HepG2 (cell line): ENCODE measurements at regions of chr2 and their contacts with region 1.

Region 1: DNA sequence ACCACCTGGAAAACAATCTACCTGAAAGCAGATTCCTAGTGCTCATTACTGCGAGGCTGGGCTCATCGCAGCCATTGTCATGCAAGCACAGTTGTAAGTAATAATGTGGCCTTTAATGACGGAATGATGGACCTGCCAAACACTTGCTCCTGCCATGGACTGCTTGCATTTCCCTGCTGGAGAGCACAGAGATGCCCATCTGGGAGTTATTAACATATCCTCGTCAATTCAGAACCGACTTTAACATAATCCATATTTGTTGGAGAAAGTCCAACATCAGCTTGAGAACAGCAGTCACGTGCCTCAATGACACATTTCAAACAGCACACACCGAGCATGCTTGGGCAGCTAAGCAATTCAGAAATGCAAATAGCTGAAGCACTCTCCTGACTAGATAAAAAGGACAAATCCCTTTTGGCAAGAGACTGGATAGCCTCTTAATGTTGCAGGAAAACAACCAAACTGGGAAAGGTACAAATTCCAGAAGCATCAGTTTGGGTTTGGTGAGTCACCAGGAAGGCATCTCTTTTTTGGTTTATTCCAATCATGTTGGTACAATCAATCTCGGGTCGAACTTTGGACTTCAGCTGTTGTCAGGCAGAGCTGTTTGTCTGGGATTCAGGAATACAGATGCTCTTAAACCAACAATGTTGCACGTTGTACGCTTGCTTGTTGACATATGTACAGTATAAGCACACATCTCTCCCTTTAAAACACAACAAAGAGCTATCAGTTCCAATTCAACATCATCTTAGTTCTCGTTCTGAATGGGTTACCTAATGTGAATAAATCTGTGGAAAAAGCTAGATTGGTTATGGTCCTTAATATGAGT is 395.8 kb downstream of the LNPK start:
- DNase-seq: peak; percentile 99
- ATAC-seq: peak; percentile 95
- H3K4me3 ChIP-seq: peak overlapping the region; percentile 12 to 40 (median 38); a peak in 4 of 6 replicates
- H3K27ac ChIP-seq: peak overlapping the region; percentile 81
- H3K4me1 ChIP-seq: peaks cover 37% of the 10 kb centered on the region
- H3K27me3 ChIP-seq: no peaks in the 10 kb centered on the region
- CTCF ChIP-seq: no peak
- EP300 ChIP-seq: peak; percentile 92 to 97
- POLR2A ChIP-seq: no peak
- RAD21 ChIP-seq: no peak

Region 2: DNA sequence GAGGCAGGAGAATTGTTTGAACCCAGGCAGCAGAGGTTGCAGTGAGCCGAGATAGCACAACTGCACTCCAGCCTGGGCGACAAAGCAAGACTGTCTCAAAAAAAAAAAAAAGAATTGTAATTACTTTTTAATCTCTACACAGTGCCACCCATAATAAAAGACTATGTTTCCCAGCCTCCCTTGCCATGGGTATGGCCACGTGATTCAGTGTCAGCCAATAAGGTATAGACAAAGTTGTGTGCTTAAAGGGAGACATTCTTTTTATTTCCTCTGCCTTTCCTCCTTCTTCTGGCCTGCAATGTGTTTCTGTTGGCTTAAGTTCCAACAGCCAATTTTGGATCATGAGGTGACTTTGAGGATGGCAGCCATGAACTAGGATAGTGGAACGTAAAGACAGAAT is 11.1 kb before region 1 on chr2:
- CTCF ChIA-PET with region 1: no interaction called
- POLR2A ChIA-PET with region 1: interaction called, 39 read pairs
- in situ Hi-C with region 1: no loop called
- intact Hi-C with region 1: loop called (anchors 1 kb)
- DNase-seq: peak; percentile 27
- ATAC-seq: peak; percentile 79
- H3K4me3 ChIP-seq: peak overlapping the region; percentile 58 to 75 (median 64)
- H3K27ac ChIP-seq: no peak overlapping the region
- H3K4me1 ChIP-seq: peaks cover 42% of the 10 kb centered on the region
- H3K27me3 ChIP-seq: no peaks in the 10 kb centered on the region
- CTCF ChIP-seq: no peak
- EP300 ChIP-seq: no peak
- POLR2A ChIP-seq: no peak
- RAD21 ChIP-seq: no peak

Region 3: DNA sequence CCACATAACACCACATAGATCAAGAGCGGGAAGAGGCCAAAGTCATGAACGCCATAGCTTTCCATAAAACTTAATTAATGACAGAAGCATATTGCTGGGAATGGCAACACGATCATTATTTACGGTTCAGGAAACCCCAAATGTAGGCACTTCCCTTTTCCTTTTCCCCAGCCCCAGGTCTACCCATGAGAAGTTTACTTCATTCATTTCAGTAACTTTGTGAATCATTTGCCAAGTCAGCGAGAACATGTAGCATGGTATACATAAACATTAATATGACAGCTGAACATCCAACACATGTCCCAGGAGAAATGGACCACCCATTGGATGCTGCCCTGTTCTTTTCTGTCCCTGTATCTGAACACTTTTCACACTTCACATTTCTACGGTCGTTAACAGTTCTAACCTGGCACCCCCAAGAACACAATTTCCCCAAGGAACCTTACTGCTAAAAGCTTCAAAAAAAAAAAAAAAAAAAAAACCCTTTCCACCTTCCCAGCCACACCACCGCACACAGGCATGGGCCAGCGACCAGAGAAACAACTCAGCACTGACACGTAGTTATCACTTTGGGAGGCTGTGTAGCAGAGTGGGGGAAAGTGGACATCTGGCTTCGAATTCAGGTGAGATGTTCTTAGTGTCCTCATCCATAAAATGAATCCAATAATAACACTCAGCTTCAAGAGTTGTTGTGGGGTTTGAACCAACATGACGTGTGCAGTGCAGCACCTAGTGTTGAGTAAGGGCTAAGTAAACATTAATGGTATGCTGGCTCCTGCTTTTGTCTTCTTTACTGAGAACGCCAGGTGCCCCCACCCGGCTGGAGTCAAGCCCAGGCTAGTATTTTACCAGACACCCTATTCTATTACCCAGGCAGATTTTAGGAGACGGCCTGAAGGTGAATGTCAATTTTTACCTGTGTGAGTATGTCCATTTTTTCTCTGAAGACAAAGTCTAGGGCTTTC is 24.3 kb after region 1 on chr2:
- CTCF ChIA-PET with region 1: no interaction called
- POLR2A ChIA-PET with region 1: interaction called, 14 read pairs
- in situ Hi-C with region 1: no loop called
- intact Hi-C with region 1: loop called (anchors 2 kb)
- DNase-seq: peak; percentile 81
- ATAC-seq: peak; percentile 96
- H3K4me3 ChIP-seq: no peak overlapping the region
- H3K27ac ChIP-seq: no peak overlapping the region
- H3K4me1 ChIP-seq: peaks cover 41% of the 10 kb centered on the region
- H3K27me3 ChIP-seq: no peaks in the 10 kb centered on the region
- CTCF ChIP-seq: peak; percentile 83
- EP300 ChIP-seq: 0 out of 4 replicates have a peak, but pooled peaks of 1 of the 2 experiments have one; percentile 3
- POLR2A ChIP-seq: no peak
- RAD21 ChIP-seq: peak; percentile 53; the same call in 1 of the 2 replicates